ENCODE measurements at regions of chr3 and their contacts with region 1.

Region 1: DNA sequence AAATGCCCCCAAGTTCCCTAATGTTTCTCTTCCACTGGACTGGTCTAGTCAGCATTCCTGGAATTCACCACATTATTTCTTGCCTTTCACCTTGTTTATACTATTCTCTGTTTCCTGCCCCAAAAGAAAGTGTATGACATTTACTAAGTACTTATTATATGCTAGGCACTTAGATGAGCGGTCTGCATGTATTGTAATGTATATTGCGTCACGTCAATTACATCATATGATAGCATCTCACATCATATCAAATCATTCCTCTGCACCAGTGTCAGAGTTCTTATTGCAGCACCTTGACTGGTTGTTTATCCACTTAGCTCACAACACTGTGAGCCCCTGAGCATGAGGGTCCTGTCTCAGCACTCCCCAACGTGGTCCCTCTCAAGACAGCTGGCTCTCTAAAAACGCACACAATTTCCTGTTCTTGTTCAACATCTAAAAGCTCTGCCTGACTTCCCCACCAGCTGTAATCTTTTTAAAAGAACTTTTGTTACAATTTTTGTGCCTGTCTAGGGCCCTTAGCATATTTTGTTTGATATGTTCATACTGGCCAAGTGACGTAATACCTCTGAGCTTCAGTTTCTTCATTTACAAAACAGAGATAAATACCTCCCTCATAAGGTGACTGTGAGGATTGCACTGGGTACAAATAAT is 58.8 kb downstream of the ARHGAP31 start:
- DNase-seq: peak; percentile 39
- H3K4me3 ChIP-seq: no peak overlapping the region
- CTCF ChIP-seq: peak; percentile 40

Region 2: GRCh38 chr3:119294696-119295445 is 58.1 kb before region 1 on chr3:
- in situ Hi-C with region 1: loop called (anchors 5 kb)
- DNase-seq: no peak
- H3K4me3 ChIP-seq: peak overlapping the region; percentile 80
- CTCF ChIP-seq: no peak

Measured in astrocyte of the cerebellum (primary cell).